Aorta (tissue), 5 donors: ENCODE measurements at regions of chr6 and their contacts with region 1.

Region 1: GRCh38 chr6:37791156-37791919 is 28.2 kb upstream of the ZFAND3 start:
- DNase-seq: peak; percentile 95 to 96
- ATAC-seq: peak; percentile 97
- H3K4me3 ChIP-seq: no peak overlapping the region
- H3K27ac ChIP-seq: no peak overlapping the region
- H3K4me1 ChIP-seq: no peaks in the 10 kb centered on the region
- H3K27me3 ChIP-seq: no peaks in the 10 kb centered on the region

Region 2: DNA sequence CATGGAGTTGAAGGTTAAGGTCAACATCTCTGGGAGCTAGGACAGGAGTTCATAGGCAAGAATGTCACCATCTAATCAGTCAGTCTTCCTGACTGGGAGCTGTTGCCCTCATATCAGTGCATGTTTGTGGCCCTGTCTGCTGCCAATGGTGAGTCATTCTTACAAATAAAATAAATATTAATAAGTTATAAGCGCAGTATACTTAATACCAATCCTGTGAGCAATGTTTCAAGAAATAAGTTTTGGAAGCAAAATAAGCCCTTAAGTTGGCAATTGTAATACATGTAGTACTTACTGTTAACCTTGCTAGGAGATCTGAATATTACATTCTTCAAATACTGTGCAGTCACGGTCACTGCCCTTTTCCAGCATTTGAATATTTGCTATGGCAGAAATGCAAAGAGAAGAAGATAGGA is 73.5 kb before region 1 on chr6:
- intact Hi-C with region 1: loop called in 1 of 2 experiments (anchors 5 kb)
- DNase-seq: no peak
- ATAC-seq: no peak
- H3K4me3 ChIP-seq: no peak overlapping the region
- H3K27ac ChIP-seq: peak overlapping the region in 1 of 2 donors; percentile 28
- H3K4me1 ChIP-seq: no peaks in the 10 kb centered on the region
- H3K27me3 ChIP-seq: no peaks in the 10 kb centered on the region

Region 3: DNA sequence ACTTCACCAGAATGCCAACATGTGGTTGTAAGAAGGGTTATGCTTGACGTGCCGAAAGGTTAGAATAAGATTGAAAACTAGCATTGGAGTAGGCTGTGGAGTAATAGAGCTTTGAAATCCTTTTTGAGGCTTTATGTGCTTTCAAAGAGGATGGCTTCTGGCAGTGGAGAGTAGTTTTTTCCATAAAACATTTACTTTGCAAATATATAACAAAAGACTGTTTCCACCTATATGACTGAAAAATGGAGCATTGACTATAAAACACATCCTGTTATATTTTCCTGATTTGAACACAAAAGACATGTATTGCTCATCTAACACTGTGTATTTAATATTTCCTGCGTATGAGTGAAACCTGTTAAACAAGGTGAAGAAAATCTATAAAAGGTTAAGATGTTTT is 67.0 kb after region 1 on chr6:
- intact Hi-C with region 1: loop called in 1 of 2 experiments (anchors 5 kb)
- DNase-seq: no peak
- ATAC-seq: no peak
- H3K4me3 ChIP-seq: no peak overlapping the region
- H3K27ac ChIP-seq: no peak overlapping the region
- H3K4me1 ChIP-seq: peaks cover 0 to 5% of the 10 kb centered on the region in 2 donors
- H3K27me3 ChIP-seq: no peaks in the 10 kb centered on the region

Region 4: DNA sequence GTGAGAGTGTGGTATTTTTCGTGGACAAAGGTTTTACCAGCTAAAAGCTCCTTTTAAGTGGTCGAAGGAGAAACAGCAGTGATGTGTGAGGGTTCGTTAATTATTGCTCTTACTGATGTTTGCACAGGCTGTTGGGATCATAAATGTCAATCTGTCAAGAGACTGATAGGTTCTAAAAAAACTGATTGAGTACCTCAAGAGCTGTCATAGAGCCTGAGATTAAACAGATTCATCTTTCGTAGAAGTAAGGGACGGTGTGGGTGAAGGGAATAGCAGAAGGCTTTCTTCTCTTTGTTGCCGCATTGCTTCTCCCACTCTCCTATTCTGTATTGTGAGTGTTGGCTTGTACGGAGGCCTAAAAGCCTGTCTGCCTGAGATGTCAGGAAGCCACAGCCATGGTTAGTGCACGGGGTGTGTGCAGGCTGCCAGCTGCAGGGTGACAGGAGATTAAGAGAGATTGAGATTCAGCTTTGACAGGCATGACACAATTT is 319.2 kb after region 1 on chr6:
- intact Hi-C with region 1: no loop called
- DNase-seq: no peak
- ATAC-seq: no peak
- H3K4me3 ChIP-seq: no peak overlapping the region
- H3K27ac ChIP-seq: no peak overlapping the region
- H3K4me1 ChIP-seq: peaks cover 0 to 3% of the 10 kb centered on the region in 2 donors
- H3K27me3 ChIP-seq: no peaks in the 10 kb centered on the region

Region 5: GRCh38 chr6:38493931-38494547 is 702.7 kb after region 1 on chr6:
- intact Hi-C with region 1: loop called (anchors 10 kb)
- DNase-seq: peak; percentile 67 to 84
- ATAC-seq: no peak
- H3K4me3 ChIP-seq: no peak overlapping the region
- H3K27ac ChIP-seq: no peak overlapping the region
- H3K4me1 ChIP-seq: no peaks in the 10 kb centered on the region
- H3K27me3 ChIP-seq: no peaks in the 10 kb centered on the region